OCI-LY7 (cell line): ENCODE measurements at regions of chr2 and their contacts with region 1.

Region 1: GRCh38 chr2:27016801-27017325 is 15.9 kb upstream of the TMEM214 start:
- DNase-seq: peak; percentile 71
- H3K4me3 ChIP-seq: no peak overlapping the region
- H3K27ac ChIP-seq: no peak overlapping the region
- H3K4me1 ChIP-seq: peaks cover 9% of the 10 kb centered on the region
- CTCF ChIP-seq: peak; percentile 88

Region 2: GRCh38 chr2:26764078-26764887 is 252.6 kb before region 1 on chr2 and contains the start of gene SLC35F6:
- CTCF ChIA-PET with region 1: no interaction called
- POLR2A ChIA-PET with region 1: no interaction called
- intact Hi-C with region 1: no loop called
- DNase-seq: peak; percentile 87
- H3K4me3 ChIP-seq: peak within 1 kb of the TSS; percentile 84
- H3K27ac ChIP-seq: no peak within 1 kb of the TSS
- H3K4me1 ChIP-seq: peaks cover 11% of the 10 kb centered on the region
- CTCF ChIP-seq: no peak
- total RNA-seq, gene SLC35F6: 10.4 and 10.6 TPM in 2 replicates

Region 3: GRCh38 chr2:26959331-26959730 is 57.5 kb before region 1 on chr2:
- CTCF ChIA-PET with region 1: interaction called, 7 read pairs
- POLR2A ChIA-PET with region 1: no interaction called
- intact Hi-C with region 1: loop called (anchors 1 kb)
- DNase-seq: no peak
- H3K4me3 ChIP-seq: no peak overlapping the region
- H3K27ac ChIP-seq: no peak overlapping the region
- H3K4me1 ChIP-seq: peaks cover 3% of the 10 kb centered on the region
- CTCF ChIP-seq: no peak

Region 4: DNA sequence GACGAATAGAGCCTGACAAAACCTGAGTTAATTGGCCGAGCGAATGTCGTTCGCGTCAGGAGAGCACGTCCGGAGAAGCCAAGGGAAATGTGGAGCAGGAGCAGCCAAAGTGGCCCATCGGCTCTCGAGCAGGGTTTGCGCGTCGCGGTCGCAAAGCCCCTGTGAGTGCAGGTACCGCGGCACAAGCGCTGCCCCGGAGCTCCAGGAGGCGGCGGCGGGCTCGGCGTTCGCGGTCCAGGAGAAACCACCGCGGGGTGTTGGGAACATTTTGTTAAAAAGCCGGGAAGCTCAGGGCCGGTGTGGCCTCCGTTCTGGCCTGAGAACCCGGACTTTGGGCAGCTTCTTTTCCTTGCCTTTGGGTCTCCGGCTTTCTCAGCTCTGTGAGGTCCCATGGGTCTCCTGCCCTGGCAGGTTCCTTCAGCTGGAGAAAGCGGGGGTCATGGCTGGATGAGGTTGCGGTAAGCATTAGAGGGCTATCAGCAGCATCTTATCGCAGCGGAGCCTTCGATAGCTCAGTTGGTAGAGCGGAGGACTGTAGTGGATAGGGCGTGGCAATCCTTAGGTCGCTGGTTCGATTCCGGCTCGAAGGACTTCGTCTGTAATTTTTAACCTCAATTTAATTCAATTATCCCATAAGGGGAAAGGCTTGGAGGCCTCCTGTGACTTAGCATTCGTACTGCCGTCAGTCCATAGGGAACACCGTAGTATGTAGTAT is 33.6 kb after region 1 on chr2:
- CTCF ChIA-PET with region 1: no interaction called
- POLR2A ChIA-PET with region 1: no interaction called
- intact Hi-C with region 1: no loop called
- DNase-seq: peak; percentile 90
- H3K4me3 ChIP-seq: peak overlapping the region; percentile 90
- H3K27ac ChIP-seq: peak overlapping the region; percentile 89
- H3K4me1 ChIP-seq: peaks cover 20% of the 10 kb centered on the region
- CTCF ChIP-seq: peak; percentile 39; the same call in 1 of the 2 replicates